ENCODE measurements at regions of chr3 and their contacts with region 1.

Region 1: DNA sequence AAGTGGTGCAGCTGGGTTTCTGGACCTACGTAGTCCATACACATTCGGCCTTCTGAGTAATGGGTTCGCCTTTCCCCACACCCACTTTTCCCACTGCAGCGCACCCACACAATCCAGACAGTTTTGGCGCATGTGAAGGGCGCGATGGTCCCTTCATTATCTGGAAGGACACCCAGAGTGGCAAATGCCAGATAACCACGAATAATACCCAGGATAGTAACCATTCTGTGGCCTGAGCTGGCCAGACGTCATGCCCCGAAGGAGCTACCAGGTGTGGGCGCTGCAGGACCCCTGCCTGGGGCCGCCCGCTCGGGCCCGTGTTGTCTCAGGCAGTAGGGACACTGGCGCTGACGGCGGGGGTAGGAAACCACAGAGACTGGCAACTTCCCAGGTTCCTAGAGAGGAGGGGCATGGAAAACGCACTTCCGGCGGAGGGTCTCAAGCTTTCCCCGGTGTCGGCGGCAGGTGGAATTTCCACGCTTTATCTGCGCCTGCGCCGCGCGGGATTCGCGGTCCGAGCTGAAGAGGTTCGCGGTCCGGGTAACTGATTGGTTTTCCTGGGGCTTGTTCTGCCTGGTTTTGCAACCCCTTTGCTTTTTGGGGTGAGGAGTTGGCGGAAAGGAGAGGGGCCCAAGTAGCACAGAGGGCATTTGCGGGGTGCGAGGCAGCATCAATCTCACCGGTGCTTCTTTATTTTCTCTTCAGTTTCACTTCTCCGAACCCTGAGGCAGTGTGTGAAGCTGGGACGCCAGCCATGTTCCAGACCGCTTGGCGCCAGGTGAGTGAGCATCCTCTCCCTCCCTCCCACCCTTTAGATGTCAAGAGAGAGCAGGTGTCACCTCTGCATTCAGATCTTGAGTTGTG is at the start of gene ZNF620:
- DNase-seq: peak; percentile 64
- CTCF ChIP-seq: peak; percentile 53

Region 2: DNA sequence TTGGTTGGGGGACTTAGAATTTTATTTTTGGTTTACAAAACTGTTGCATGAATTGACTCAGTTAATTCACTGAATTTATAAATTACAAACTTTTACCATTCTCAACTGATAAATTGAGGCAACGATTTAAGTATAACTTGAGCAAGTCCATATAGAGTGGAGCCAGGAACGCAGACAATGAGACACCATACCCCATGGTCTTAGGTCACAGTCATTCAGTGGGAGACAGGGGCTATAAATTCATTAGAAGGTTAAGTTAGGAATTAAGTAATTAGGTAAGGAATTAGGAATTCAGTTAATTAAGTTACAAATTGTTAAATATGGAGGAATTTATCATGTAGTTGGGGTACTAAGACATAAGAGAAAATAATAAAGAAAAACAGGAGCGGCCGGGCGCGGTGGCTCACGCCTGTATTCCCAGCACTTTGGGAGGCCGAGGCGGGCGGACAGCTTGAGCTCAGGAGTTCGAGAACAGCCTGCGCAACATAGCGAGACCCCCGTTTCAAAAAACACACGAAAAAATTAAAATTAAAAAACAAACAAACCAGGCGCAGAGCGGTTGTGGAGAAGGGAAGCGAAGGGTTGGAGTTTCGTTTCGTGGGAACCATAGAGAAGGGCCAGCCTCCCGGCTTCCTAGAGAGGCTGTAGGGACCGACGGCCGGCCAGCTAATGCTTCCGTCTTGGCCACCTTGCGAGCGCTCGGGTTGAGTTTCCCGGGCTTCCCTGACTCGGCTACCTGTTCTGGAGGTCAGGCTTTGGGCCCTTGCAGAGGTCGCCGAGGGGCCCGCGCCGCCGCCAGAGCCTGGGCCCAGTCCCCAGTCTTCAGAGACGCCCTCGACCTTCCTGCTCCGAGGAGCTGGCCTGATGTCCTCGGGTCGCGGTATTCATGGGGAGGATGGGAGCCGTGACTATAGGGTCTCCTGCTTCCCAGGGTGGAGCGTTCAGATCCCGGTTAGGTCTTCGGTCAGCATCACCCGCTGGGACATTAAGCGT is 29.1 kb before region 1 on chr3 and contains the start of gene ZNF619:
- CTCF ChIA-PET with region 1: interaction called, 12 read pairs
- POLR2A ChIA-PET with region 1: no interaction called
- DNase-seq: peak; percentile 86
- CTCF ChIP-seq: no peak

Region 3: DNA sequence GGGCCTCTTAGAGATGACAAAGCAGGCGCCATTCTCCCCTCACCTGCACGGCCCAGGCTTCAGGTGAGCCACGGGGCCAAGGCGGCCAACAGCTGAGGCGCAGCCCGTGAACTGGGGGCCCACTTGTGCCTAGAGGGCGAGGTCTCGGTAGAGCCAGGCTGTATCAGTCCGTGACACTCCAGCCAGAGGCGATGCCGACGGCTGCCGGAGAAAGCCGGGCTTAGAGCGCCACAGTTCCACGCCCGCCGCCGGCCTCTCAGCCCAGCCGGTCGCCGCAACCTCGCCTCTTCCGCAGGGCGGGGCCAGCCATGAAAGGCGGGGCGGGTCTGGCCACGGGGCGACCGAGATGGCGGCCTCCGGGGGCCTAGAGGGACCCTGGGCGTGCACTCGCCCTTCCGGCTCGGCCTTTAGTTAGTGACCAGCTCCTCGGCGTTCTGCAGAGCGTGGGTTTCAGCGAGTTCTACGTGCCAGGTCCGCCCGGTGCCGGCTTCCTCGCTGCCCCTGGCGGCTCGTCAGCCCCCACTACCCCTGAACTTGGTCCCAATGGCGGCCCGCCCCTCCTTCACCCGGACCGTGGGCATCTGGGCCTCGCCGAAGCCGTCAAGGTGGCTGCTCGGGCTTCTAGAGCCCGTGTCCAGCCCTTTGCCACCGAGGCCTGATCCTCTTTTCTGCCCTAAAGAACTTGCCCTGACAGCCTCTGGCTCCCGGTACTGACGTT is 18.9 kb after region 1 on chr3 and contains the start of gene ZNF621:
- CTCF ChIA-PET with region 1: interaction called, 10 read pairs
- POLR2A ChIA-PET with region 1: no interaction called
- DNase-seq: peak; percentile 95
- CTCF ChIP-seq: no peak

Region 4: GRCh38 chr3:40546816-40547215 is 41.0 kb after region 1 on chr3:
- CTCF ChIA-PET with region 1: no interaction called
- POLR2A ChIA-PET with region 1: no interaction called
- DNase-seq: no peak
- CTCF ChIP-seq: no peak